ENCODE measurements at regions of chr1 and their contacts with region 1.

Region 1: GRCh38 chr1:45011837-45012638 is at the start of gene UROD:
- DNase-seq: peak; percentile 98
- H3K4me3 ChIP-seq: peak within 1 kb of the TSS; percentile 74 to 99 (median 96)
- H3K27ac ChIP-seq: peak within 1 kb of the TSS; percentile 78 to 90 (median 84)
- H3K4me1 ChIP-seq: peaks cover 33 to 58% (median 55%) of the 10 kb centered on the region in 4 donors
- H3K27me3 ChIP-seq: no peaks in the 10 kb centered on the region
- CTCF ChIP-seq: peak in 1 of 3 experiments; percentile 26
- EP300 ChIP-seq: no peak
- POLR2A ChIP-seq: no peak
- total RNA-seq, gene UROD: 84.3 to 90.2 (median 89.3) TPM

Region 2: DNA sequence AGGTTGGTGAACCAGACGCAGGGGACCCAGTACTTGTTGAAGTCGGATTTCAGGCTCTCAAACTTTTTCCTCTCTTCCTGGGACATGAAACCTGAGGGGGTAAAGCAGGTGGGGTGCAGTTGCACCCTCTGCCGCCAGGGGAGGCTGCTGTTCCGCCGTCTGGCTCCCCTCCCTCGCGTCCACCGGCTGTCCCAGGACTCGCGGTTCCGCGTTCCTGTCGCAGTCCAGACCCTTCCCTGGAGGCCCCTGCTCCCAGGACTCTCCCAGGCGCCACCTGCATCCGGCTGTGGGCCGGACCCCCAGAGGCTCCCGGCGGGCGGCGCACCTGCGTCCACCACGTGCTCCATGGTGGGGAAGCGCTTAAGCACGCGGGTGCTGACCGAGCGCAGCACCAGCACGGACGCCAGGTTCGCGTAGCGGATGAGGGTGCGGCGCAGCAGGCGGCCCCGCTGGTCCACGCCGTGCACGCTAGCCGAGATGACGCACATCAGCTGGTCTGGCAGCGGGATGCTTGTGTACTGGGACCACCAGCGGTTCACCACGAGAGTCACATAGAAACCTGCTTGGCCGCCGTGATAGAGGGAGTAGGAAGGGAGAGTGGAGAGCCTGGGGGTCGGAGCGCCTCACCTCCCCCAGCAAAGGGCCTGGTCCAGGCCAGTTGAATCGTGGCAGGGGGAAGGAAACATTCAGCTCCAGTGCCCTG is 225.7 kb before region 1 on chr1:
- intact Hi-C with region 1: loop called (anchors 5 kb)
- DNase-seq: no peak
- H3K4me3 ChIP-seq: peak overlapping the region; percentile 48 to 71 (median 58)
- H3K27ac ChIP-seq: peak overlapping the region; percentile 55 to 70 (median 64)
- H3K4me1 ChIP-seq: peaks cover 33 to 40% (median 36%) of the 10 kb centered on the region in 4 donors
- H3K27me3 ChIP-seq: no peaks in the 10 kb centered on the region
- CTCF ChIP-seq: peak; percentile 97 to 100 (median 99)
- EP300 ChIP-seq: no peak
- POLR2A ChIP-seq: no peak

Region 3: DNA sequence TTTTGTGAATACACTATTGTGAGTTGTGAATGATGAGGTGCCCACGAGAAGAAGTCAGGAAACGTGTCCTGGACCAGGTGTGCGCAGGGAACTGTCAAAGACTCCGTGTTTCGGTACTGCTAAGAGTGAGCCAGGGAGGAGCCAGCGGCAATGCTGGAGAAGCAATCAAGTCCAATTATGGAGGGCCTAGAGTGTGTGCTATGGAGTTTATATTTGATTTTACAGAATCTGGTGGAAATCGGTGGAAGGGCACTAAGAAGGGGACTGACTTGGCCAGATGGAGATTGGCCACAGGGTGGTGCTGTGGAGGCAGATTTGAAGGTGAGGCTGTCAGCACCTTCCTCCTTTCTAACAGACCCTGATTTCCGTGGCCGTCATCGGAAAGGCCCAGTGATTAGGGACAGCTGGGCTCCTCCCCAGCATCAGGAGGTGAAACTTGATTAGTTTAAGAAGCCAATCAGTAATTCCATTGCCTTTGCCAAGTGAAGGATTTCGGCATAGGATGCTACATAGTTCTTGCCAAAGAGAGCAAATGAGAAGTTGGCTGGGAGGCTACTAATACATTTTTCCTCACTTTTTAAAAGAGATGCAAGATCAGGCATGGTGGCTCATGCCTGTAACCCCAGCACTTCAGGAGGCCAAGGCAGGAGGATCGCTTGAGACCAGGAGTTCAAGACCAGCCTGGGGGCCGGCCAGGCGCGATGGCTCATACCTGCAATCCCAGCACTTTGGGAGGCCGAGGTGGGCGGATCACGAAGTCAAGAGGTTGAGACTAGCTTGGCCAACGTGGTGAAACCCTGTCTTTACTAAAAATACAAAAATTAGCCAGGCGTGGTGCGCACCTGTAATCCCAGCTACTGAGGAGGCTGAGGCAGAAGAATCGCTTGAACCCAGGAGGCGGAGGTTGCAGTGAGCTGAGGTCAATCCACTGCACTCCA is 176.0 kb before region 1 on chr1:
- intact Hi-C with region 1: loop called (anchors 5 kb)
- DNase-seq: no peak
- H3K4me3 ChIP-seq: peak overlapping the region in 1 of 4 donors; percentile 8
- H3K27ac ChIP-seq: peak overlapping the region in 1 of 4 donors; percentile 5
- H3K4me1 ChIP-seq: peaks cover 0 to 8% (median 8%) of the 10 kb centered on the region in 4 donors
- H3K27me3 ChIP-seq: no peaks in the 10 kb centered on the region
- CTCF ChIP-seq: peak; percentile 75 to 89 (median 81)
- EP300 ChIP-seq: no peak
- POLR2A ChIP-seq: no peak

Region 4: DNA sequence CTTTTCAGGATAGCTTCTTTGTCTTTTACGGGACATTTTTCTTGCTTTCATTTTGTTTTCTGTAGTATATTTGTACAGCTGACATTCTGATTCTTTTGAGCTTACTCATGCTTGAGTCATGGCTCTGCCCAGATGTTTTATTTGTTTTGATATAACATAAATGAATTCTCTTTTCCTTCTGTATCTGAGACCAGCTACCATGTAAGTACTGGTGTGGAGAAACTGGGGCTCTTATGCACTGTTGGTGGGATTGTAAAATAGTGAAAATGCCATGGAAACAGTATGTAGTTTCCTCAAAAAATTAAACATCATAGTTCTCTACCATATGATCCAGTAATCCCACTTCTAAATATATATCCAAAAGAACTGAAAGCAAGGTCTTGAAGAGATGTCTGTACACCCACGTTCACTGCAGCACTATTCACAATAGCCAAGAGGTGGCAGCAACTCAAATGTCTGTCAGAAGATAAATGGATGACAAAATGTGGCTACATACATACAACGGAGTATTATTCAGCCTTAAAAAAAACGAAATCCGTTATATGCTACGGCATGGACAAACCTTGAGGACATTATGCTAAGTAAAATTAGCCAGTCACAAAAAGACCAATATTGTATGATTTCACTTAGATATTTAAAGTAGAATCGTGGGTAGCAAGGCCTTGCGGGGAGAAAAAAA is 87.1 kb before region 1 on chr1:
- intact Hi-C with region 1: no loop called
- DNase-seq: no peak
- H3K4me3 ChIP-seq: no peak overlapping the region
- H3K27ac ChIP-seq: no peak overlapping the region
- H3K4me1 ChIP-seq: peaks cover 0 to 17% (median 8%) of the 10 kb centered on the region in 4 donors
- H3K27me3 ChIP-seq: no peaks in the 10 kb centered on the region
- CTCF ChIP-seq: peak in 1 of 3 experiments; percentile 43
- EP300 ChIP-seq: no peak
- POLR2A ChIP-seq: no peak

Region 5: DNA sequence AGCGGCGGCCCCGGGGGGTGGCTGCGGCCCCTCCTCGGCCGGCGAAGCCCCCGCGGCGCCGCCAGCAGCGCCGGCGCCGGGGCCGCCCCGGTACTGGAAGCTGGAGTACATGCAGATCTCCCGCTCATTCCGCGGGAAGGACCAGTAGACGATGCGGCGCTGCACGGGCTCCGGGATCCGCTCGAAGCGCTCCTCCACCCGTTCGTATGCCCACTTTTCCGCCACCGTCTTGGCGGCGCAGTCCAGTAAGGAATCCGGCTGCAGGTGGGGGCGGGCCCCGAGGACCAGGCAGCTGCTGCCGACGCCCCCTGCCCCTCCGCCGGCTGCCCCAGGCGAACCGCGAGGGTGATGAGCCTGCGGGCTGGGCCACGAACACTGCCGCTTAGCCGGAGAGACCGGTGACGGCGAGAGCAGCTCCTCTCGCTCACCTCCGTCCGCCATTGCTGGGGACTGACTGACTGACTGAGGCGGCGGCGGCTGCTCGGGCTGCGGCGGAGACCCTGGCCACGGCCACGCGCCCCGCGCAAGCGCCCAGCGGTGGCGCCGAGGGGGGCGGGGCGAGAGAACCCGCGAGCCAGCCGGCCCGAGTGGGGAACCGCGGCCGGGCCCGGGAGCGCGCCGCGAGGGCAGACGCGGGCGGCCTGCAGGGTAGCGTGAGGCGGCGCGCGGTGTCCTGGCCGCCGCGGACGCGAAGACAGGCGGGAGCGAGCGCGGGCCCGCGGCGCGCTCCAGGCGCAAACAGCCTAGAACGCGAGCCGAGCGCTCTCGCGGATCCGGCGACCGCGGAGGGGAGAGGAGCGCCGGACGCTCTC is 194.1 kb after region 1 on chr1 and contains the start of gene ZSWIM5:
- intact Hi-C with region 1: loop called (anchors 10 kb)
- DNase-seq: no peak
- H3K4me3 ChIP-seq: peak within 1 kb of the TSS; percentile 84 to 97 (median 88)
- H3K27ac ChIP-seq: peak within 1 kb of the TSS; percentile 87 to 94 (median 92)
- H3K4me1 ChIP-seq: peaks cover 9 to 37% (median 27%) of the 10 kb centered on the region in 4 donors
- H3K27me3 ChIP-seq: no peaks in the 10 kb centered on the region
- CTCF ChIP-seq: no peak
- EP300 ChIP-seq: no peak
- POLR2A ChIP-seq: no peak
- total RNA-seq, gene ZSWIM5: 3.3 to 6.2 (median 5.3) TPM

Region 6: GRCh38 chr1:45303582-45304310 is 291.7 kb after region 1 on chr1:
- intact Hi-C with region 1: loop called (anchors 2 kb)
- DNase-seq: peak; percentile 99
- H3K4me3 ChIP-seq: peak overlapping the region; percentile 68 to 88 (median 78)
- H3K27ac ChIP-seq: peak overlapping the region; percentile 82 to 92 (median 89)
- H3K4me1 ChIP-seq: peaks cover 11 to 22% (median 19%) of the 10 kb centered on the region in 4 donors
- H3K27me3 ChIP-seq: no peaks in the 10 kb centered on the region
- CTCF ChIP-seq: peak; percentile 67 to 79 (median 74)
- EP300 ChIP-seq: no peak
- POLR2A ChIP-seq: no peak

Region 7: GRCh38 chr1:45490626-45491486 is 478.8 kb after region 1 on chr1 and contains the start of gene TESK2:
- intact Hi-C with region 1: loop called (anchors 5 kb)
- DNase-seq: peak; percentile 99
- H3K4me3 ChIP-seq: peak within 1 kb of the TSS; percentile 62 to 93 (median 82)
- H3K27ac ChIP-seq: peak within 1 kb of the TSS; percentile 73 to 89 (median 84)
- H3K4me1 ChIP-seq: peaks cover 0 to 24% (median 19%) of the 10 kb centered on the region in 4 donors
- H3K27me3 ChIP-seq: no peaks in the 10 kb centered on the region
- CTCF ChIP-seq: peak in 2 of 3 experiments; percentile 35 to 36
- EP300 ChIP-seq: no peak
- POLR2A ChIP-seq: peak; percentile 47
- total RNA-seq, gene TESK2: 3.3 to 6.5 (median 4.8) TPM

Measured in esophagus muscularis mucosa (tissue), 4 donors.